ENCODE measurements at regions of chr6 and their contacts with region 1.

Region 1: DNA sequence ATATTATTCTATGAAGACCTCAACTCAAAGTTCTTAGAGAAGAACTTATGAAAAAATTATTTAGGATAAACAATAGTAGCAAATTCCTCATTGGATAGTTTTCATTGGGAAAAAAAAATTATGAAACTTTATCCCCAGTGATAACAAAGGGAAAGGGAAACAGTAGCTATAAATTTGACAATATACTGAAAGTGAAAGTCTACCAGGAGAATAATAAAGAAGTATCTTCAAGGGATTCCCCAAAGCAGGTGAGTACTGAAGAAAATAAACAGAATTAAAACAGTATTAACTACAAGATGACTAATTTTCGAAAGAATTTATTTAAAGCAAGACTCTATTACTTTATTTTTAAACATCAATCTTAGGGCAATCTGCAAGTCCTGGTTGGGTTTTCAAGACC is 56.4 kb downstream of the REPS1 start:
- DNase-seq: no peak
- ATAC-seq: peak; percentile 69
- H3K4me3 ChIP-seq: no peak overlapping the region
- H3K27ac ChIP-seq: no peak overlapping the region
- H3K4me1 ChIP-seq: no peaks in the 10 kb centered on the region
- H3K27me3 ChIP-seq: no peaks in the 10 kb centered on the region
- CTCF ChIP-seq: no peak
- EP300 ChIP-seq: no peak
- POLR2A ChIP-seq: no peak
- RAD21 ChIP-seq: no peak

Region 2: GRCh38 chr6:138943089-138943625 is 11.5 kb after region 1 on chr6:
- CTCF ChIA-PET with region 1: interaction called, 5 read pairs
- POLR2A ChIA-PET with region 1: no interaction called
- RAD21 ChIA-PET with region 1: no interaction called
- SMC1A ChIA-PET with region 1: interaction called, 23 read pairs
- in situ Hi-C with region 1: no loop called
- intact Hi-C with region 1: no loop called
- DNase-seq: no peak
- ATAC-seq: no peak
- H3K4me3 ChIP-seq: no peak overlapping the region
- H3K27ac ChIP-seq: no peak overlapping the region
- H3K4me1 ChIP-seq: peaks cover 5% of the 10 kb centered on the region; the same call in 1 of the 2 replicates
- H3K27me3 ChIP-seq: no peaks in the 10 kb centered on the region
- CTCF ChIP-seq: no peak
- EP300 ChIP-seq: no peak
- POLR2A ChIP-seq: no peak
- RAD21 ChIP-seq: no peak

Measured in GM12878 (cell line).